ENCODE measurements at regions of chr2 and their contacts with region 1.

Region 1: DNA sequence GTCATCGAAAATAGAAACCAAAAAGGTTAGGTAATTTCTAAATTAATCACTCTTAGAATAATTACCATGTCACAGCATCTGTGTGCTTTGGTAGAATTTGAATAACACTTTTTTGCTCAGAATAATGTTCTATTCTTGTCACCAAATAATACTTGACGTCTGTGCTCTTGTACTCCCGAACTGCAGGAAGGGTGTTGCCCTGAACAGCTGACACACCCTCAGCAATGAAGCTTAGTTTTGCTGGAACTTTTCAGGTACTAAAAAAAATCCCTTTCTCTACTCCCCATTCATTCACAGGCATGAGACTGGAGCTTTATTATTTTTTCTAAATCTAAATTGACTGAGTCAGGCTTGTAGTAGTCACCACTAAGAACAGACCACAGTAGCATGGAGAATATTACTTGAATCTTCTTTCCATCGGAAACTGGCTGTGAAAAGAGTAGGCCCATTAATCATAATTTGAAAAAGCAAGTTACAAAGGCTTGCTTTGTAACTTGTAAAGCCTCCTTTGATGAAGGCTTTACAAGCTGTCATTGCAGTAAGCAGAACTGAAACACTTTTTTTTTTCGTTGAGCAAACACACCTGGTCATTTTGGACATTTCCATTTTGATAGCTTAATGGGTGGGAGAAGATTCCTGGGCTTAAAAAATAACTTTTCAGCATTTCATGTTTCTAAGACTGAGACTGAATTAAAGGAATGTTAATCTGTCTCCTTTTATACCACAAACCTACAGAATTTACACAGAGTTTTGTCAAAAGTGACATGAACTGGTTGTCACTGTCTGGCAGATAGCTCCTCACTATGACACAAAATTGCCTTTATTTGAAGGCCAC is 70.3 kb upstream of the PELI1 start:
- DNase-seq: peak; percentile 91
- ATAC-seq: peak; percentile 69
- H3K4me3 ChIP-seq: peak overlapping the region; percentile 28
- H3K27ac ChIP-seq: peak overlapping the region; percentile 98
- H3K4me1 ChIP-seq: peaks cover 44% of the 10 kb centered on the region
- H3K27me3 ChIP-seq: no peaks in the 10 kb centered on the region
- CTCF ChIP-seq: no peak
- EP300 ChIP-seq: peak; percentile 96 to 99
- POLR2A ChIP-seq: no peak
- RAD21 ChIP-seq: 0 out of 2 replicates have a peak, but pooled peaks have one; percentile 15

Region 2: DNA sequence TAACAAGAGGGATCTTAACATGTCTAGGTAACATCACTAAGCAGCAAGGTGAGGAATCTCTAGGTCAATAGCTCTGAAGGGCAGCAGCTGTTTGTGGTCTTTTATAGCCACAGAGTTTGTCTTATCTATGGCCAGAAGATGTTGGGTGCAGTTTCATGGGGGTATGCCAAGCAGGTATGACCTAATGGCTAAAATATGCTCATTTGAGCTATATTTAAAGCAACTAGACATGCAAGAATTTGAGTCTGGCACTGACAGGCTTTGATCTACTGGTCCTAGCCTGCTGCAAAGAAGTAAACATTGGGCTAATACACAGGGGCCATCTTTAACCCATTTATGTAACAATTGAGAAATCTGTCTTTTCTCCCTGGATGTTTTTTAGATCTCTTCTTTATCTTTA is 386.7 kb before region 1 on chr2:
- CTCF ChIA-PET with region 1: no interaction called
- POLR2A ChIA-PET with region 1: no interaction called
- RAD21 ChIA-PET with region 1: no interaction called
- SMC1A ChIA-PET with region 1: no interaction called
- in situ Hi-C with region 1: no loop called
- intact Hi-C with region 1: no loop called
- DNase-seq: no peak
- ATAC-seq: peak; percentile 34; the same call in 2 of the 3 replicates
- H3K4me3 ChIP-seq: no peak overlapping the region
- H3K27ac ChIP-seq: no peak overlapping the region
- H3K4me1 ChIP-seq: peaks cover 5% of the 10 kb centered on the region; the same call in 1 of the 2 replicates
- H3K27me3 ChIP-seq: no peaks in the 10 kb centered on the region; a peak in 1 of 4 replicates
- CTCF ChIP-seq: no peak
- EP300 ChIP-seq: no peak
- POLR2A ChIP-seq: no peak
- RAD21 ChIP-seq: no peak

Region 3: GRCh38 chr2:64101141-64101591 is 113.3 kb before region 1 on chr2:
- CTCF ChIA-PET with region 1: interaction called, 6 read pairs
- POLR2A ChIA-PET with region 1: interaction called, 5 read pairs
- RAD21 ChIA-PET with region 1: interaction called, 27 read pairs
- SMC1A ChIA-PET with region 1: interaction called, 16 read pairs
- in situ Hi-C with region 1: no loop called
- intact Hi-C with region 1: loop called (anchors 1 kb)
- DNase-seq: no peak
- ATAC-seq: peak; percentile 68
- H3K4me3 ChIP-seq: peak overlapping the region; percentile 26; the same call in 1 of the 2 replicates
- H3K27ac ChIP-seq: peak overlapping the region; percentile 80
- H3K4me1 ChIP-seq: peaks cover 46% of the 10 kb centered on the region
- H3K27me3 ChIP-seq: no peaks in the 10 kb centered on the region
- CTCF ChIP-seq: no peak
- EP300 ChIP-seq: no peak
- POLR2A ChIP-seq: no peak
- RAD21 ChIP-seq: no peak

Region 4: DNA sequence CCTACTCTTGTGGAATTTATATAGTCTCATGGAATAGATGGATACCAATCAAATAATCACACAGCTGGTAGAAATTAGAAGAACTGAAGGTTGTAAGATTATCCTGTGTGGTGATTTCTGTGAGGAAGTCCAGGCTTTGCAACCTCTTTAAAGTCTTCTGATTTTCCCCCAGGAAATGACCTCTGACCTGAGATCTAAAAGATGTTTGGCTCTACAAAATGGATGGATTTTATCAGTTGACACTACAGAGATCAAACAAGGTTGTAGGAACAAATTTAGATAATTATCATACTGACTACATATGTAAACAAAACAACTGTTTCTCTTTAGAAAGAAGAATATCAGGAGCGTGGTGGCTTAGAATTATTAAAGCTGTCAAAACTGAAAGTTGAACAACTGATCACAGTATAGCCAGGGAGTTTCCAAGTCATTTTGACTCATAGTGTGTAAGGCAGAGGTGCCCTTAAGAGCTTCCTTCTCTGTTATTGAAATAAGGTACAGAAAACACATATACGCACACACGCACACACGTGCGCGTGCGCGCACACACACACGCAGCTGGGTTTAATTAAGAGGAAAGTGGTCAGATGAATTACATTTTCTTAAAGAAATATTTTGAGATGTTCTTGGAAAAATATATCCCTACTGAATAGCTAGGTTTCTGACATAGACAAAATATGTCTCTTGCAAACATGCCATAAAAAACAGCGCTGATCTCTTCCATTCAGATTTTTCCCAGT is 34.7 kb before region 1 on chr2:
- CTCF ChIA-PET with region 1: interaction called, 3 read pairs
- POLR2A ChIA-PET with region 1: interaction called, 16 read pairs
- RAD21 ChIA-PET with region 1: interaction called, 19 read pairs
- SMC1A ChIA-PET with region 1: interaction called, 33 read pairs
- in situ Hi-C with region 1: no loop called
- intact Hi-C with region 1: no loop called
- DNase-seq: peak; percentile 70
- ATAC-seq: peak; percentile 98
- H3K4me3 ChIP-seq: no peak overlapping the region
- H3K27ac ChIP-seq: peak overlapping the region; percentile 57
- H3K4me1 ChIP-seq: peaks cover 12% of the 10 kb centered on the region; the same call in 1 of the 2 replicates
- H3K27me3 ChIP-seq: no peaks in the 10 kb centered on the region
- CTCF ChIP-seq: no peak
- EP300 ChIP-seq: peak; percentile 64 to 69; a peak in 2 of 4 replicates
- POLR2A ChIP-seq: no peak
- RAD21 ChIP-seq: no peak

Region 5: DNA sequence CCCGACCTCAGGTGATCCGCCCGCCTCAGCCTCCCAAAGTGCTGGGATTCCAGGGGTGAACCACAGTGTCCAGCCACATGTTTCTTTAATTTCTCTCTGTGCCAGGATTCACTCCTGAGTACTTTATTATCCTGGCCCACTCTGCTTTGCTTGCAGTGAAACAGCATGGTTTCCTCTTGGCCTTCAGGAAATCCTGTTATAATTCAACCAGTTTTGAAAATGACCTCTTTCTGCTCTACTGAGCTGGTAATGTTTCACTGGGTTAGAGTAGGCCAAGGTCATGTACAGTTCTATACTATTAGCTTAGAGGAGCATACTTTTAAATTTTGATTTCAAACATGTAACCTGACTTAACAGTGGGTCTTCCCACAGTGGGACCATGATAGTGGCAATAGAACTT is 20.3 kb after region 1 on chr2:
- CTCF ChIA-PET with region 1: interaction called, 3 read pairs
- POLR2A ChIA-PET with region 1: interaction called, 11 read pairs
- RAD21 ChIA-PET with region 1: interaction called, 5 read pairs
- SMC1A ChIA-PET with region 1: interaction called, 149 read pairs
- in situ Hi-C with region 1: no loop called
- intact Hi-C with region 1: no loop called
- DNase-seq: no peak
- ATAC-seq: peak; percentile 45
- H3K4me3 ChIP-seq: no peak overlapping the region
- H3K27ac ChIP-seq: no peak overlapping the region
- H3K4me1 ChIP-seq: peaks cover 3% of the 10 kb centered on the region; the same call in 1 of the 2 replicates
- H3K27me3 ChIP-seq: no peaks in the 10 kb centered on the region
- CTCF ChIP-seq: no peak
- EP300 ChIP-seq: no peak
- POLR2A ChIP-seq: no peak
- RAD21 ChIP-seq: no peak

Region 6: DNA sequence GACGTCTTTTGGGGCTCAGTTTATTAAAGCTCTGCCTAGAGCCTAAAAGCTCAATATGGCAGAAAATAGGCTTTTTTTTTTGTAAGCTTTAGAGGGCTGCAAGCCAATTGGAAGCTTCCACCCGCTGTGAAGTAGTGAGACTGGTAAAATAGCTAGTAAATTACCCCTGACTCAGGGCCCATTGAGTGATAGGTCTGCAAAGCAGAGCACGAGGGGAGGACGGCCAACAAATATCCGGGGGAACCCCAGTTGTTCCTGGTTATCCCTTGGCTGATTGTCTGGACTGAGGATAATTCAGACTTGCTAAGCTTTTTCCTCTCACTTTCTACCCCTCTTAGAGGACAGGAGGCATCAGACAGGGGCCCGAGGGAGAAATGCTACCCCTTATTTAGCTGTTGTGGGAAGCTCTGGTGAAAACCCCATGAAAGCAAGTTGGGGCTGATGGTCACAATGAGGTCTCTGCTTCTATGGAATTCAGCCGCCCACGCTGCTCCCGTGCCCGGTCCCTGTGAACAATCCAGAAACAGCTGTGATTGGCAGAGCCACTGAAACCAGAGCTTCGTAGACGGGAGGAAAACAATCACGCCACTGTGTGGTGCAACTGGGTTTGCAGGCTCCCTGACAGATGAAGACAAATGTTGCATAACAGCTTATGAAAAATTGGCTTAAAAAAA is 97.6 kb after region 1 on chr2:
- CTCF ChIA-PET with region 1: interaction called, 28 read pairs
- POLR2A ChIA-PET with region 1: interaction called, 13 read pairs
- RAD21 ChIA-PET with region 1: interaction called, 35 read pairs
- SMC1A ChIA-PET with region 1: interaction called, 38 read pairs
- in situ Hi-C with region 1: no loop called
- intact Hi-C with region 1: no loop called
- DNase-seq: no peak
- ATAC-seq: peak; percentile 80
- H3K4me3 ChIP-seq: no peak overlapping the region
- H3K27ac ChIP-seq: no peak overlapping the region
- H3K4me1 ChIP-seq: no peaks in the 10 kb centered on the region
- H3K27me3 ChIP-seq: no peaks in the 10 kb centered on the region
- CTCF ChIP-seq: peak in 2 of 3 experiments; percentile 38 to 55; a peak in 3 of 6 replicates
- EP300 ChIP-seq: no peak
- POLR2A ChIP-seq: no peak
- RAD21 ChIP-seq: no peak

Region 7: DNA sequence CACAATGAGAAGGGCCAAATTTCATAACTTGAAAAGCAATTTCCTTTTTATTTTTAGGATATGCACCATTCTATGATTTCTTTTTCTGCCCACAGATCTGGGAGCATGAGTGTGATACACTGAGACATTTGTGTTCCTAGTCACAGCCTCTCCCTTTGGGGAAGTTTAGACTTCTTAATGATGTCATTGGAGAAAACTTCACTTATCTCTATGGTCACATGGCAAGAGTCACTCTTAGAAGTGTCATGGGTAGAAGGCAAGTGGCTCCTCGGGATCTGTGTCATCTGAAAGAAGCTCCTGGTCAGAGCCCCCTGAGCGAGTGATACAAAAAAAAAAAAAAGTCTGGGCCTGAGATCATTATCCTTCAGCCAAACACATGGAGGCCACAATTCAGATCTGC is 176.9 kb after region 1 on chr2:
- CTCF ChIA-PET with region 1: no interaction called
- POLR2A ChIA-PET with region 1: no interaction called
- RAD21 ChIA-PET with region 1: no interaction called
- SMC1A ChIA-PET with region 1: no interaction called
- in situ Hi-C with region 1: no loop called
- intact Hi-C with region 1: no loop called
- DNase-seq: no peak
- ATAC-seq: no peak
- H3K4me3 ChIP-seq: no peak overlapping the region
- H3K27ac ChIP-seq: no peak overlapping the region
- H3K4me1 ChIP-seq: no peaks in the 10 kb centered on the region
- H3K27me3 ChIP-seq: no peaks in the 10 kb centered on the region
- CTCF ChIP-seq: no peak
- EP300 ChIP-seq: no peak
- POLR2A ChIP-seq: no peak
- RAD21 ChIP-seq: no peak

Region 8: GRCh38 chr2:64474121-64474571 is 259.6 kb after region 1 on chr2:
- CTCF ChIA-PET with region 1: no interaction called
- POLR2A ChIA-PET with region 1: no interaction called
- RAD21 ChIA-PET with region 1: no interaction called
- SMC1A ChIA-PET with region 1: no interaction called
- in situ Hi-C with region 1: no loop called
- intact Hi-C with region 1: no loop called
- DNase-seq: no peak
- ATAC-seq: peak; percentile 79
- H3K4me3 ChIP-seq: no peak overlapping the region
- H3K27ac ChIP-seq: no peak overlapping the region
- H3K4me1 ChIP-seq: peaks cover 5% of the 10 kb centered on the region; the same call in 1 of the 2 replicates
- H3K27me3 ChIP-seq: no peaks in the 10 kb centered on the region
- CTCF ChIP-seq: no peak
- EP300 ChIP-seq: no peak
- POLR2A ChIP-seq: no peak
- RAD21 ChIP-seq: no peak

Region 9: GRCh38 chr2:64742678-64743077 is 528.2 kb after region 1 on chr2:
- CTCF ChIA-PET with region 1: no interaction called
- POLR2A ChIA-PET with region 1: no interaction called
- RAD21 ChIA-PET with region 1: no interaction called
- SMC1A ChIA-PET with region 1: no interaction called
- in situ Hi-C with region 1: no loop called
- intact Hi-C with region 1: no loop called
- DNase-seq: no peak
- ATAC-seq: no peak
- H3K4me3 ChIP-seq: no peak overlapping the region
- H3K27ac ChIP-seq: 0 out of 2 replicates have a peak overlapping the region, but pooled peaks have one; percentile 7
- H3K4me1 ChIP-seq: peaks cover 10% of the 10 kb centered on the region
- H3K27me3 ChIP-seq: no peaks in the 10 kb centered on the region
- CTCF ChIP-seq: no peak
- EP300 ChIP-seq: no peak
- POLR2A ChIP-seq: no peak
- RAD21 ChIP-seq: no peak

Measured in GM12878 (cell line).